ENCODE measurements at regions of chr5 and their contacts with region 1.

Region 1: GRCh38 chr5:77560677-77561263 is 68.7 kb upstream of the WDR41 start:
- DNase-seq: no peak
- H3K4me3 ChIP-seq: no peak overlapping the region
- H3K27ac ChIP-seq: no peak overlapping the region
- H3K4me1 ChIP-seq: no peaks in the 10 kb centered on the region
- H3K27me3 ChIP-seq: peaks cover 2% of the 10 kb centered on the region
- CTCF ChIP-seq: peak; percentile 64

Region 2: DNA sequence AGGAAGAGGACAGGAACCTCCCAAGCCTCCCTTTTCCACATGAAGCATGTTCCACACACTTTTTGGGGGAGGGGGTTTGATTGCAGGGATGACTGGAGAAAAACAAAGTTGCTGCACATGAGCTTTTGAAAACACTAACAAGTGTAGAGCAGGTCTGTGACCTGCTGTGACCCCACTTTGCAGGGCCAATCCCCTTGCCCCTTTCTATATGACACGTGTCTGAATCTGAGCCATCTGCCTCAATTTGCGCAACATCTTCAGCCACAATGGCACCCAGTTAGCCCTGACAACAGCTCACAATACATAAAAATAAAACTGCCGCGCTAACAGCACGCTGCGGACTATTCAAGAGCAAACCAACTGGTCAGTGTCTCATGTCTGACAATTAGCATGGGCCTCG is 443.1 kb after region 1 on chr5:
- intact Hi-C with region 1: loop called (anchors 5 kb)
- DNase-seq: no peak
- H3K4me3 ChIP-seq: no peak overlapping the region
- H3K27ac ChIP-seq: no peak overlapping the region
- H3K4me1 ChIP-seq: peaks cover 13% of the 10 kb centered on the region
- H3K27me3 ChIP-seq: no peaks in the 10 kb centered on the region
- CTCF ChIP-seq: no peak

Measured in left ventricle myocardium inferior (tissue), 1 donor.